SK-N-SH (cell line): ENCODE measurements at regions of chr3 and their contacts with region 1.

Region 1: DNA sequence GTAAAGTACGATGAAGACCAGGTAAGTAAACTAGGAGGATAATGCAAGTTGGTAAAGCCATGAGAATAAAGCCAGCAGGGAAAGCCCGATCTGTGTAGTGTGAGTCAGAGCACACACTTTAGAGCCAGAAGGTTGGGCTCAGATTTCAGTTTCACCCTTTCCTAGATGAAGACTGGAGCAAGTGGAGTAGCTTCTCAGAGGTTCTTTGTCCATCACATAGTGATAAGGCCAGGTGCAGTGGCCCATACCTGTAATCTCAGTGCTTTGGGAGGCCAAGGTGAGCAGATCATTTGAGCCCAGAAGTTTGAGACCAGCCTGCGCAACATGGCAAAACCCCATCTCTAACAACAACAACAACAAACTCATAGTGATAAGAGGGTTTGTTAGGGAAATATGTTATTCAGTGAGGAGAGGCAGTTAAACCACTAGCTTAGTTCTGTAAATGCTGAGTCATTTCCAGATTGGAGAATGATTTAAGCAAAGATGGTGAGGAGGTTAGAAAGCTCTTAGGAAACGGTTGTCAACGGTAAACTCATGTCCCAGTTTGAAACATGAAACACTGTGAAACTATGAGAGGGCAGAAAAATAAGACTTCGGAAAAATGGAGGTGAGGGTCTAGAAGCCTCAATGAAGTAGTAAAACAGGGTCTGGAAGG is 39.0 kb downstream of the IL12A start:
- DNase-seq: no peak
- H3K4me3 ChIP-seq: no peak overlapping the region
- H3K27ac ChIP-seq: peak overlapping the region in 1 of 2 experiments; percentile 63; a peak in 2 of 4 replicates
- H3K4me1 ChIP-seq: no peaks in the 10 kb centered on the region
- H3K27me3 ChIP-seq: no peaks in the 10 kb centered on the region
- CTCF ChIP-seq: no peak
- EP300 ChIP-seq: no peak
- RAD21 ChIP-seq: no peak

Region 2: GRCh38 chr3:159884661-159885402 is 142.8 kb before region 1 on chr3:
- CTCF ChIA-PET with region 1: interaction called, 16 read pairs
- POLR2A ChIA-PET with region 1: no interaction called
- DNase-seq: peak; percentile 52
- H3K4me3 ChIP-seq: no peak overlapping the region
- H3K27ac ChIP-seq: peak overlapping the region in 1 of 2 experiments; percentile 97; a peak in 2 of 4 replicates
- H3K4me1 ChIP-seq: peaks cover 32 to 51% of the 10 kb centered on the region in 2 experiments
- H3K27me3 ChIP-seq: no peaks in the 10 kb centered on the region
- CTCF ChIP-seq: peak; percentile 73
- EP300 ChIP-seq: no peak
- RAD21 ChIP-seq: peak; percentile 73

Region 3: GRCh38 chr3:160052385-160053047 is 24.8 kb after region 1 on chr3:
- CTCF ChIA-PET with region 1: interaction called, 16 read pairs
- POLR2A ChIA-PET with region 1: no interaction called
- DNase-seq: peak; percentile 32
- H3K4me3 ChIP-seq: no peak overlapping the region
- H3K27ac ChIP-seq: no peak overlapping the region; a peak in 1 of 4 replicates
- H3K4me1 ChIP-seq: peaks cover 0 to 17% of the 10 kb centered on the region in 2 experiments; a peak in 2 of 4 replicates
- H3K27me3 ChIP-seq: no peaks in the 10 kb centered on the region
- CTCF ChIP-seq: no peak
- EP300 ChIP-seq: no peak
- RAD21 ChIP-seq: no peak

Region 4: DNA sequence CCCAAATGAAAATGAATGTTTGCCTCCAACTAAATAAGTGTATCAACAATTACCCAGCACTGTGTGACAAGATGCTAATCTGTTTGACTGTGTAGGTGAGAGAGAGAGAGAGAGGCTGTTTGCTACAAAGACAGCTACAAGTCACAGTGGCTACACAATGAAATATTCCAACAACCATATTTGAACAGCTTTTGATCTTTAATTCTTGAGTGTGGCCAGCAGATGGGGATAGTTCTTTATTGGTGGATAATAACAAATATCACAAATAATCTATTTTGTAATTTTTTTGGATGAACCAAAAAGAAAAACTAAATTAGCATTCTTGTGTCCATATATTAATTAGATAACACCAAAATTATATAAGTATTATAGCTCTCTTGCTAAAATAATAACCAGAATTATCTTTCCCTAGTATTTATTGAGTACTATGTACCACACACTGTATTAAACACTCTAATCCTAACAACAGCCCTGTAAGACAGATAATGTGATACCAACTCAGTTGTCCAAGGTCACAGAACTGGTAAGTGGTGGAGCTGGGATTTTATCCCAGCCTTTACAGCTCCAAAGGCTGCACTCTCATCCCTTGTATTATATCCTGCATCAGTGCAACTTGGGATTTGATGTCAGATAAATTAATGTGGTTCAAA is 135.7 kb after region 1 on chr3:
- CTCF ChIA-PET with region 1: interaction called, 18 read pairs
- POLR2A ChIA-PET with region 1: no interaction called
- DNase-seq: peak; percentile 46
- H3K4me3 ChIP-seq: no peak overlapping the region
- H3K27ac ChIP-seq: peak overlapping the region in 1 of 2 experiments; percentile 36; a peak in 2 of 4 replicates
- H3K4me1 ChIP-seq: peaks cover 0 to 8% of the 10 kb centered on the region in 2 experiments; a peak in 2 of 4 replicates
- H3K27me3 ChIP-seq: no peaks in the 10 kb centered on the region
- CTCF ChIP-seq: peak; percentile 68
- EP300 ChIP-seq: no peak
- RAD21 ChIP-seq: peak; percentile 73

Region 5: DNA sequence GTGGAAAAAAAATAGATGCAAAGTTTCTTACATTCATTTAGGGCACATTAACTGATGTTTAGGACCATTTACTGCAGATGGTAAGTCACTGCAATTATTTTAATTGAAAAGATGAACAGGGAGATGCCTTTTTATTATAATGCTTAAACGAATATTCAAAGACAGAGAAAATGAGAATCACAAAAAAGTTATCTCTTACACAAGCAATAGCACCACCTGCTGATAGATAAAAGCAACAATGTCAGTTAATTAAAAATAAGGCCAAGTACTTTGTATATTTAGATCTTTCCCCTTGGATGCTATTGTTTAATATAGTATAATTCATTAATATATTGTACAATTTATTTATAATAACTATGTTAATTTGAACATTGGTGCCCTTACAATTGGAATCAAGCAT is 315.5 kb after region 1 on chr3:
- CTCF ChIA-PET with region 1: interaction called, 30 read pairs
- POLR2A ChIA-PET with region 1: no interaction called
- DNase-seq: peak; percentile 5
- H3K4me3 ChIP-seq: no peak overlapping the region
- H3K27ac ChIP-seq: no peak overlapping the region
- H3K4me1 ChIP-seq: no peaks in the 10 kb centered on the region
- H3K27me3 ChIP-seq: no peaks in the 10 kb centered on the region
- CTCF ChIP-seq: peak; percentile 64
- EP300 ChIP-seq: no peak
- RAD21 ChIP-seq: peak; percentile 72

Region 6: DNA sequence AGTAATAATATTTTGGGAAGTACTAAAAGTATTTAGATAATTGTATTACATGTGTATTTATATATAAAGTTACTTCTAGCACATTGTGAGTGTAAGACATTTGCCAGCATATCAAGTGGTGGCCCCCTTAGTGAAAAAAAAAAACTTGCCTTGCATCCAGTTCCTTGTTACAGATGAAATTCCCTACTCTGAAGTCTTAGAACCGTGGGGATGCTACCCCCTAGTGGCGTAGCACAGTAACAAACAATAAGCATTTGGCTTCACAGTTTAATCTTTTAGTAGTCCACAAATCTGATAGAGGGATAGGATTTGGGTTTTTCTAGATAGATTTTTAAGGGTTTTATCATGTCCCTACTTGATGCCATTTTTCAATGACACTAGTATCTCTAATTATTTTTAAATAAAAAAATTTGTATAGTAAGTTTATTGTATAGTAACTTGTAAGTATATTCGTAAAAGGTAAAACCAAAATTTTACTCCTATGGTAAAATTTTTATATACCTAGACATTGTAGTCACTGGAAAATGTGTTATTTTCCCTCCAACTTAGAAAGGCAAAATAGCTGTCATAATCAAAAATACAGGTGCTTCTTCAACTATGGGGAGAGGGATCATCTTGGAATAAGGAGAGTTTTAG is 386.1 kb after region 1 on chr3:
- CTCF ChIA-PET with region 1: interaction called, 29 read pairs
- POLR2A ChIA-PET with region 1: no interaction called
- DNase-seq: peak; percentile 64
- H3K4me3 ChIP-seq: no peak overlapping the region; a peak in 1 of 4 replicates
- H3K27ac ChIP-seq: peak overlapping the region in 1 of 2 experiments; percentile 44; a peak in 2 of 4 replicates
- H3K4me1 ChIP-seq: peaks cover 0 to 4% of the 10 kb centered on the region in 2 experiments; a peak in 2 of 4 replicates
- H3K27me3 ChIP-seq: no peaks in the 10 kb centered on the region
- CTCF ChIP-seq: peak; percentile 90
- EP300 ChIP-seq: no peak
- RAD21 ChIP-seq: peak; percentile 89